Naive thymus-derived CD4-positive, alpha-beta T cell (primary cell): ENCODE measurements at regions of chr5 and their contacts with region 1.

Region 1: DNA sequence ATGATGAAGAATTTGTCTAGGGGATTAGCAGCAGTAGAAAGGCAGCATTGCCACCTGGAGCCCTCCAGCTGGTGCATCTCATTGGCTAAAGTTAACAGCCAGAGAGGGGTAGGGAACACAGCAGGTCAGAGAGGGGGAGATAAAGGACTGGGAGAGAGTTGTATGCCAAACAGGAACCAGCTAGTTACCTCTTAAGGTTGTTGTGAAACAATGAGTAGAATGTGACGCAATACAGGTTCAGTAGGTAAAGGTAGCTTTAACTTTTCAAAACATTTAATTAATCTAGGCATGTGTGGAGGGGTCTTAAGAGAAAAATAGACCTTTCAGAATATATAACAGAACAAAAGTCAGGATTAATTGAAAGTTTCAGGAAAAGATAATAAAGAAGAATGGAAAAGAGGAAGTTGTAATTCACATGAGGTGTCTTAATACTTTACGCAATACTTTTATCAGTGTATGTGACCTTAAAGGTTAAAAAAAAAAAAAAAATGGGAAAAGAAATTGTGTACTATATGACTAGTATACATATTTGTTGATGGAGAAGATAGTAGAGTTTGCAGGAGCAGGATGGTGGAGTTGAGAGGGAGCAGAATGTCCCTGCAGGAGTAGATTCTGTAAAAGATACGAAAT is 14.3 kb downstream of the FBXO38 start:
- DNase-seq: no peak
- ATAC-seq: no peak
- H3K4me3 ChIP-seq: no peak overlapping the region
- H3K4me3 Mint-ChIP-seq: no peak overlapping the region
- H3K27ac ChIP-seq: no peak overlapping the region
- H3K27ac Mint-ChIP-seq: peak overlapping the region in 6 of 9 donors; percentile 11 to 82 (median 40)
- H3K4me1 ChIP-seq: no peaks in the 10 kb centered on the region
- H3K4me1 Mint-ChIP-seq: peaks cover 32 to 80% (median 58%) of the 10 kb centered on the region in 7 donors
- H3K27me3 ChIP-seq: no peaks in the 10 kb centered on the region
- H3K27me3 Mint-ChIP-seq: no peaks in the 10 kb centered on the region

Region 2: DNA sequence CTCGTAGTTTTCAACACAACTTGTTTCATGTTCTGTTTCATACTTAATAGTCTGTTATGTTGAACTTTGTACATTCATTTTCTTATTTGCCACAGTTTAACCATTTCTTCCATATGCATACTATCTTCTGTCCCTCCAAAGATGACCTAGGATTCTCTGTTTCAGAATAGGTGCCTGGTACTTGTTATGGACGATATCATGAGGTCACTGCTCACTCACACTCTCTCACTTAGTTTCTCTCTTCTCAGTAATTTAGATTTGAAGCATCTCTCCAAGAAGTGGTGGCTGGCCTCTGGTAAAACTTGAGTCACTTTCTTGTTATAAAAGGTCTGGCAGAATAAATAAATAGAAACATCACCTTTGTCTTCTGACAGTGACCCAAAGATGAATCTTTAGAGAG is 14.0 kb after region 1 on chr5:
- CTCF ChIA-PET with region 1: interaction called, 6 read pairs
- POLR2A ChIA-PET with region 1: interaction called, 5 read pairs
- intact Hi-C with region 1: loop called in 1 of 2 experiments (anchors 2 kb)
- DNase-seq: no peak
- ATAC-seq: no peak
- H3K4me3 ChIP-seq: no peak overlapping the region
- H3K4me3 Mint-ChIP-seq: no peak overlapping the region
- H3K27ac ChIP-seq: no peak overlapping the region
- H3K27ac Mint-ChIP-seq: peak overlapping the region in 3 of 9 donors; percentile 18 to 58 (median 29)
- H3K4me1 ChIP-seq: no peaks in the 10 kb centered on the region
- H3K4me1 Mint-ChIP-seq: peaks cover 0 to 29% (median 13%) of the 10 kb centered on the region in 7 donors
- H3K27me3 ChIP-seq: no peaks in the 10 kb centered on the region
- H3K27me3 Mint-ChIP-seq: no peaks in the 10 kb centered on the region

Region 3: DNA sequence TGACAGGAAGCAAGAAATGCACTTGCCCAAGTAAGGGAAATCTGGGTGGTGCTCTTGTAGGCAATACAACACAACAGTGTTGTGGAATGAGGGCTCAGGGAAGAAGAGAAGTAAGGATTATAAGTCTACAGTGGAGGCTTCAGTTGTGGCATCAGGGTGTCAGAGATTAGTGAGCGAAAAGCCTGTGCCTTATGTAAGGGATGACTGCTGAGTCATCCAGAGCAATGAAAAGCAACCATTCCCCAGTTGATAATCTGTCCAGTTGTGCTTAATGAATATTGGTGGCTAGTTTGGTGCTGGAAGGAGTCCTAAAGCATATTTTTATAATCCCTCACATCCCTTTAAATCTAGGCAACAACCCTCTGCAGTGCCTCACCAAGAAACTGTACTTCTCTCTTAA is 27.7 kb after region 1 on chr5:
- CTCF ChIA-PET with region 1: interaction called, 3 read pairs
- POLR2A ChIA-PET with region 1: no interaction called
- intact Hi-C with region 1: loop called in 1 of 2 experiments (anchors 5 kb)
- DNase-seq: no peak
- ATAC-seq: no peak
- H3K4me3 ChIP-seq: no peak overlapping the region
- H3K4me3 Mint-ChIP-seq: no peak overlapping the region
- H3K27ac ChIP-seq: no peak overlapping the region
- H3K27ac Mint-ChIP-seq: peak overlapping the region in 7 of 9 donors; percentile 11 to 74 (median 33)
- H3K4me1 ChIP-seq: no peaks in the 10 kb centered on the region
- H3K4me1 Mint-ChIP-seq: peaks cover under 1 to 28% (median 24%) of the 10 kb centered on the region in 7 donors
- H3K27me3 ChIP-seq: no peaks in the 10 kb centered on the region
- H3K27me3 Mint-ChIP-seq: no peaks in the 10 kb centered on the region

Region 4: GRCh38 chr5:148998174-148998797 is 600.2 kb after region 1 on chr5:
- CTCF ChIA-PET with region 1: no interaction called
- POLR2A ChIA-PET with region 1: no interaction called
- intact Hi-C with region 1: no loop called
- DNase-seq: peak in 5 of 9 donors; percentile 5 to 25 (median 17)
- ATAC-seq: peak; percentile 67
- H3K4me3 ChIP-seq: no peak overlapping the region
- H3K4me3 Mint-ChIP-seq: no peak overlapping the region
- H3K27ac ChIP-seq: no peak overlapping the region
- H3K27ac Mint-ChIP-seq: no peak overlapping the region
- H3K4me1 ChIP-seq: no peaks in the 10 kb centered on the region
- H3K4me1 Mint-ChIP-seq: no peaks in the 10 kb centered on the region
- H3K27me3 ChIP-seq: no peaks in the 10 kb centered on the region
- H3K27me3 Mint-ChIP-seq: peaks cover 19 to 61% (median 28%) of the 10 kb centered on the region in 5 donors